A549 (cell line): ENCODE measurements at regions of chr19 and their contacts with region 1.

Region 1: GRCh38 chr19:41206926-41207750 is 11.9 kb upstream of the AXL start:
- DNase-seq: no peak
- ATAC-seq: no peak
- H3K4me3 ChIP-seq: no peak overlapping the region
- H3K27ac ChIP-seq: no peak overlapping the region
- H3K4me1 ChIP-seq: no peaks in the 10 kb centered on the region
- CTCF ChIP-seq: no peak
- EP300 ChIP-seq: no peak
- POLR2A ChIP-seq: no peak
- RAD21 ChIP-seq: no peak

Region 2: GRCh38 chr19:40982594-40983101 is 224.5 kb before region 1 on chr19:
- CTCF ChIA-PET with region 1: no interaction called
- POLR2A ChIA-PET with region 1: no interaction called
- DNase-seq: no peak
- ATAC-seq: peak; percentile 60 to 65; a peak in 4 of 6 replicates
- H3K4me3 ChIP-seq: no peak overlapping the region
- H3K27ac ChIP-seq: no peak overlapping the region
- H3K4me1 ChIP-seq: peaks cover 4% of the 10 kb centered on the region; the same call in 2 of the 3 replicates
- CTCF ChIP-seq: no peak
- EP300 ChIP-seq: no peak
- POLR2A ChIP-seq: no peak
- RAD21 ChIP-seq: no peak

Region 3: GRCh38 chr19:41039806-41040205 is 167.3 kb before region 1 on chr19:
- CTCF ChIA-PET with region 1: no interaction called
- POLR2A ChIA-PET with region 1: no interaction called
- DNase-seq: no peak
- ATAC-seq: no peak
- H3K4me3 ChIP-seq: no peak overlapping the region
- H3K27ac ChIP-seq: no peak overlapping the region
- H3K4me1 ChIP-seq: no peaks in the 10 kb centered on the region
- CTCF ChIP-seq: no peak
- EP300 ChIP-seq: no peak
- POLR2A ChIP-seq: no peak
- RAD21 ChIP-seq: no peak

Region 4: GRCh38 chr19:41186971-41187883 is 19.9 kb before region 1 on chr19:
- CTCF ChIA-PET with region 1: interaction called, 96 read pairs
- POLR2A ChIA-PET with region 1: no interaction called
- DNase-seq: no peak
- ATAC-seq: no peak
- H3K4me3 ChIP-seq: no peak overlapping the region
- H3K27ac ChIP-seq: no peak overlapping the region
- H3K4me1 ChIP-seq: peaks cover 38% of the 10 kb centered on the region
- CTCF ChIP-seq: no peak
- EP300 ChIP-seq: no peak
- POLR2A ChIP-seq: no peak
- RAD21 ChIP-seq: no peak

Region 5: GRCh38 chr19:41226053-41226873 is 19.1 kb after region 1 on chr19:
- CTCF ChIA-PET with region 1: interaction called, 295 read pairs
- POLR2A ChIA-PET with region 1: interaction called, 15 read pairs
- DNase-seq: peak; percentile 95 to 97
- ATAC-seq: peak; percentile 73 to 77
- H3K4me3 ChIP-seq: peak overlapping the region; percentile 41
- H3K27ac ChIP-seq: peak overlapping the region; percentile 91 to 95
- H3K4me1 ChIP-seq: peaks cover 64% of the 10 kb centered on the region
- CTCF ChIP-seq: no peak
- EP300 ChIP-seq: peak; percentile 72 to 93; a peak in 3 of 5 replicates
- POLR2A ChIP-seq: no peak; the same call in 1 of the 2 replicates
- RAD21 ChIP-seq: peak in 1 of 2 experiments; percentile 36; a peak in 3 of 5 replicates

Region 6: DNA sequence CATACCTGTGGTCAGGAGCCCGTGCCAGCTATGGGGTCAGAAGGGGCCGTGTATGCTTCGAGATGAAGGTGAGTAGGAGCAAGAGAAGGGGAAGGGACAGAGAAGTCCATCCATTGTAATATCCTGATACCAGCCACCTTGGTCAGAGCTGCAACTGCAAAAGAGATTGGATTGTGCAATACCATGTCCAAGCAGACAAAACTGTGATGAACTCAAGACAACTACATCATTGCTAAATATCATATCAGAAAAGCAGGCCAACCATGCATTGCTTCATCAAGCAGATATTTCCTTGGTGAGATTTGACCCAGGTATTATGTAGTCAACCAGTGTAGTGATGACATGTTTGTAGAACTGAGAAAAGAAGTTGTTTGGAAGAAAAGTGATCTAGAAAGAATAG is 69.1 kb after region 1 on chr19:
- CTCF ChIA-PET with region 1: interaction called, 26 read pairs
- POLR2A ChIA-PET with region 1: no interaction called
- DNase-seq: no peak
- ATAC-seq: no peak; a peak in 1 of 6 replicates
- H3K4me3 ChIP-seq: no peak overlapping the region
- H3K27ac ChIP-seq: no peak overlapping the region
- H3K4me1 ChIP-seq: no peaks in the 10 kb centered on the region
- CTCF ChIP-seq: no peak
- EP300 ChIP-seq: no peak
- POLR2A ChIP-seq: no peak
- RAD21 ChIP-seq: no peak

Region 7: DNA sequence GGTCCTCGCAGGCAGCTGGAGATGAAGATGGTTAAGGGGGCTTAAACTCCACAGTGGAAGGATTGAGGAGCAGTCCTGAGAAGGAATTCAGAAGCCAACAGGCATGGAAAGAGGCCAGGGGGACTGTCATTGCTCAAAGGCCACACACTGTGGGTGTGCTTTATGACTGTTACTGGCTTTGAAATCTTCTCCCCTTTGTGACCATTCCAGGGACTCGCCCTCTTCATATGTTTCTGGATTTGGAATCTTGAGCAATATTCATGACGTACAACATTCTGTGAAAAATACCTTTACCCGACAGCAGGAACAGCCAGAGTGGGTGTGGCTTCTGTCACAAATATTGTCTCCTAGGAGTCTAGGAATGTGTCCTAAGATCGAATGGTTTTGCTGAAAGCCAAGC is 464.4 kb after region 1 on chr19:
- CTCF ChIA-PET with region 1: no interaction called
- POLR2A ChIA-PET with region 1: no interaction called
- DNase-seq: no peak
- ATAC-seq: no peak
- H3K4me3 ChIP-seq: no peak overlapping the region
- H3K27ac ChIP-seq: no peak overlapping the region
- H3K4me1 ChIP-seq: no peaks in the 10 kb centered on the region
- CTCF ChIP-seq: no peak
- EP300 ChIP-seq: no peak
- POLR2A ChIP-seq: no peak
- RAD21 ChIP-seq: no peak